WTC11 (cell line): ENCODE measurements at regions of chr11 and their contacts with region 1.

Region 1: GRCh38 chr11:15650105-15650938 is 535.6 kb downstream of the INSC start:
- DNase-seq: peak; percentile 97
- ATAC-seq: peak; percentile 97
- H3K4me3 Mint-ChIP-seq: peak overlapping the region; percentile 47
- H3K27ac Mint-ChIP-seq: no peak overlapping the region
- H3K4me1 Mint-ChIP-seq: peaks cover 22% of the 10 kb centered on the region
- H3K27me3 Mint-ChIP-seq: no peaks in the 10 kb centered on the region; the same call in 1 of the 2 replicates
- CTCF ChIP-seq: peak; percentile 71

Region 2: GRCh38 chr11:15580056-15580774 is 70.1 kb before region 1 on chr11:
- CTCF ChIA-PET with region 1: no interaction called
- POLR2A ChIA-PET with region 1: no interaction called
- DNase-seq: no peak
- ATAC-seq: no peak
- H3K4me3 Mint-ChIP-seq: no peak overlapping the region
- H3K27ac Mint-ChIP-seq: no peak overlapping the region
- H3K4me1 Mint-ChIP-seq: peaks cover 8% of the 10 kb centered on the region; the same call in 1 of the 2 replicates
- H3K27me3 Mint-ChIP-seq: no peaks in the 10 kb centered on the region
- CTCF ChIP-seq: no peak

Region 3: DNA sequence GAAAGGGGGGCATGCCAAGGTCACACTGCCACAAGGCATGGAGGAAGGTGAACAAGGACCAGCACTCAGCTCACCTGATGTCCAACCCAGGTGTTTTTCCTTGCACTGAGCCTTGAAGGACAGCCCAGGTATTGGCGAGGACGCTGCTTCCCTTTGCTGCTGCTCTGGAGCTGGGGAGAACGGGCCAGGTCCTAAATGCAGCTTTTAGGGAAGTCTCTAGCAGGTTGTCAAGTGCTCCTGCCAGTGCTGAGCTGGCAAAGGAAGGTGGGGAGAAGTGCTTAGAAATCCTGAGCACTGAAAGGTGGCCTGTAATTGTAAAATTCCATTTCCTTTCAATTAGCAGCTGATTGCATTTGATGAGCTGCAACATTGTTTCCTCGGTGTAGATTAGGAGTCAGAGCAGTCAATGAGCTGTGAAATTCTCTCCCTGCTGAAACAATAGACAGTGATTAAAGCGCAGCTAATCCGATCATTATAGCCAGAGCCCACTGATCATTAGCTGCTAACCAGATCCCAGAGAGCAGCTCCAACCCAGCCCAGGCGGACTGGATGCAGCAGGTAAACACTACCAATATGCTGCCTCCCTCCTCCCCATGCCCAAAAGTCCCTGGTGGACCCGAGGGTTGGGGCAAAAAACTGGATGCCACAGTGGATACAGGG is 28.0 kb before region 1 on chr11:
- CTCF ChIA-PET with region 1: interaction called, 13 read pairs
- POLR2A ChIA-PET with region 1: no interaction called
- DNase-seq: no peak
- ATAC-seq: peak; percentile 71
- H3K4me3 Mint-ChIP-seq: no peak overlapping the region
- H3K27ac Mint-ChIP-seq: no peak overlapping the region
- H3K4me1 Mint-ChIP-seq: peaks cover 21% of the 10 kb centered on the region
- H3K27me3 Mint-ChIP-seq: no peaks in the 10 kb centered on the region; the same call in 1 of the 2 replicates
- CTCF ChIP-seq: no peak

Region 4: GRCh38 chr11:15688351-15688792 is 38.0 kb after region 1 on chr11:
- CTCF ChIA-PET with region 1: no interaction called
- POLR2A ChIA-PET with region 1: no interaction called
- DNase-seq: no peak
- ATAC-seq: no peak
- H3K4me3 Mint-ChIP-seq: no peak overlapping the region
- H3K27ac Mint-ChIP-seq: no peak overlapping the region
- H3K4me1 Mint-ChIP-seq: peaks cover 16% of the 10 kb centered on the region
- H3K27me3 Mint-ChIP-seq: peaks cover 3% of the 10 kb centered on the region; the same call in 1 of the 2 replicates
- CTCF ChIP-seq: no peak

Region 5: GRCh38 chr11:15775015-15775541 is 124.8 kb after region 1 on chr11:
- CTCF ChIA-PET with region 1: interaction called, 10 read pairs
- POLR2A ChIA-PET with region 1: no interaction called
- DNase-seq: no peak
- ATAC-seq: no peak
- H3K4me3 Mint-ChIP-seq: no peak overlapping the region
- H3K27ac Mint-ChIP-seq: no peak overlapping the region
- H3K4me1 Mint-ChIP-seq: peaks cover 23% of the 10 kb centered on the region
- H3K27me3 Mint-ChIP-seq: no peaks in the 10 kb centered on the region
- CTCF ChIP-seq: no peak